Heart left ventricle (tissue), 16 donors: ENCODE measurements at regions of chr19 and their contacts with region 1.

Region 1: GRCh38 chr19:16247353-16248182 is 49.9 kb downstream of the AP1M1 start:
- DNase-seq: peak; percentile 84 to 94 (median 88)
- ATAC-seq: peak; percentile 95 to 99 (median 98)
- H3K4me3 ChIP-seq: no peak overlapping the region
- H3K27ac ChIP-seq: peak overlapping the region in 5 of 12 donors; percentile 16 to 57 (median 31)
- H3K4me1 ChIP-seq: peaks cover 0 to 13% (median 2%) of the 10 kb centered on the region in 12 donors
- H3K27me3 ChIP-seq: no peaks in the 10 kb centered on the region
- CTCF ChIP-seq: peak; percentile 91 to 98 (median 95)
- POLR2A ChIP-seq: no peak

Region 2: GRCh38 chr19:16216744-16217670 is 30.6 kb before region 1 on chr19:
- intact Hi-C with region 1: no loop called
- DNase-seq: no peak
- ATAC-seq: peak in 3 of 4 donors; percentile 28 to 55 (median 52)
- H3K4me3 ChIP-seq: no peak overlapping the region
- H3K27ac ChIP-seq: no peak overlapping the region
- H3K4me1 ChIP-seq: peaks cover 0 to 11% (median 0%) of the 10 kb centered on the region in 12 donors
- H3K27me3 ChIP-seq: no peaks in the 10 kb centered on the region
- CTCF ChIP-seq: no peak
- POLR2A ChIP-seq: no peak

Region 3: DNA sequence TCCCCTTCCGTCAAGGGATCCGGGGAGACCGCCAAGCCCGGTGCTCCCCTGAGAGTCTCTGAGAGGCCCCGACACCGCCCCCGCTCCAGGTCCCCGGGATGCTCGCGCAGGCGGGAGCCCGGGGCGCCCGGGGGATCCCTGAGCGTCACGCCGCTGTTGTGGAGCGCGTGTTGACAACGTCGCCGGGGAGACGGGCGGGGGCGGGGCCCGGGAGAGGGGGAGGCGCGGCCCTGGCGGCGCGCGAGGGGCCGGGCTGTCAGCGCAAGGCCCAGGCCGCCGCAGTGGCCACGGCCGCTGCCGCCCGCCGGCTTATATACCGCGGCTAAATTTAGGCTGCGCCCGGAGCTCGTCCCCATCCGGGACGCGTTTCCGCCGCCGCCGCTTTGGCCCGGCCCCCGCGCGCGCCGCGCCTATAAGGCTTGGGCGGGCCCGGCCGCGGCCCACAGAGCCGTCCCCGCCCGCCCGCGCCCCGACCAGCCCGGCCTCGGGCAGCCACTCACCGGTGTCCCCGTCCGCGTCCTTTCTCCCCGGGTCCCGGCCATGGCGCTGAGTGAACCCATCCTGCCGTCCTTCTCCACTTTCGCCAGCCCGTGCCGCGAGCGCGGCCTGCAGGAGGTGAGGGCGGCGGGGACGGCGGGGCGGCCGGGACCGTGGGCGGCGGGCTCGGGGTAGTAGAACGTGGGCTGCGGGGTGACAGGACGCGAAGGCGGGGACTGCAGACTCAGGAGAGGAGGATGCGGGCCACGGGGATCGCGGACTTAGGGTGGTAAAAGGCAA is 77.0 kb after region 1 on chr19 and contains the start of gene KLF2:
- intact Hi-C with region 1: loop called in 1 of 10 experiments (anchors 5 kb)
- DNase-seq: peak; percentile 96 to 97 (median 97)
- ATAC-seq: peak; percentile 71 to 92 (median 82)
- H3K4me3 ChIP-seq: peak within 1 kb of the TSS; percentile 64 to 99 (median 83)
- H3K27ac ChIP-seq: peak within 1 kb of the TSS; percentile 92 to 99 (median 98)
- H3K4me1 ChIP-seq: peaks cover 0 to 44% (median 25%) of the 10 kb centered on the region in 12 donors
- H3K27me3 ChIP-seq: no peaks in the 10 kb centered on the region
- CTCF ChIP-seq: no peak
- POLR2A ChIP-seq: peak; percentile 85 to 98
- total RNA-seq, gene KLF2: 28.0 to 87.2 (median 45.0) TPM

Region 4: DNA sequence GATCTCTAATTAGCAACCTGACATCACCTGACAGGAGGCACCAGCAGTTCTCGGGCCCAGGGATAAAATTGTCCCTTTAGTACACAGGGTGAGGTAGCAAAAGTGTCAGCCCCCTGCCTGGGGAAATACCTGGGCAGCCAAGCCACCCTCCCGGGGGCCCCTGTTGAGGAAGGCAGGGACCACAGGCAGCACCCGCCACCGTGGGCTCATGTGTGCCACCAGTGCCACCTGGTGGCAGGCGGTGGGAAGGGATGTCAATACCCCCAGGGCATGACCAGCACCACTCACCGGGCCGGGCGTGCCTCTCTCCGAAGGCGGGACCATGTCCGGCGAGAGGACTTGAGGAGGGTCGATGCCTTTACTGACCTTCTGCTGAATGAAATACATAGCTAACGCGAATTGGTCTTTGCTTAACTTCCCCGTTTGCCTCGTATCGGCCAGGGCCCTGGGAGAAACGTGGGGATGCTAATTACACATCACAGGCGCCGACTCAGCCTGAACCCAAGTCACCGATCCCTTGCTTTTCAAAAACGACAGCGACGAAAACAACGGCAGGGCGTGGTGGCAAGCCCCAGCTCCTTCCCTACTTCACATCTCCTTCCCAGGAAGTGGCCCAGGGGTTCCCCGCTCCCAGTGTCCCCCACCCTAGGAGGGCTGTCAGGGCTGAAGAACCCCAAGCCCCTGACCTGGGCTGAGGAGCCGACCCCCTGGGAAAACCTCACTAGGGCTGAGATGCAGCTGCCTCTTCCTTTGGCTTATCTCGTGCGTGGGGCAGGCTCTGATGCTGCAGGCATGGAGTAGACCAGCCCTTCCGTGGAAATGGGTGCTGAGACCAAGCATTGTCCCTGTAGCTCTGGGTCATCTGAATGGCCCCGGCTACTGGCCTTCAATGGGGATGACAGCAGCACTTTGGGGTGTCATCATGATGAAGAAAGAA is 170.4 kb after region 1 on chr19:
- intact Hi-C with region 1: loop called in 1 of 10 experiments (anchors 10 kb)
- DNase-seq: peak; percentile 63 to 85 (median 72)
- ATAC-seq: peak; percentile 63 to 71 (median 68)
- H3K4me3 ChIP-seq: no peak overlapping the region
- H3K27ac ChIP-seq: peak overlapping the region in 6 of 12 donors; percentile 3 to 58 (median 26)
- H3K4me1 ChIP-seq: peaks cover 0 to 45% (median 33%) of the 10 kb centered on the region in 12 donors
- H3K27me3 ChIP-seq: no peaks in the 10 kb centered on the region
- CTCF ChIP-seq: peak; percentile 83 to 96 (median 88)
- POLR2A ChIP-seq: no peak